Endothelial cell of umbilical vein (primary cell): ENCODE measurements at regions of chr6 and their contacts with region 1.

Region 1: GRCh38 chr6:118283766-118284165 is 264.3 kb upstream of the PLN start:
- DNase-seq: peak; percentile 64
- H3K4me3 ChIP-seq: no peak overlapping the region
- H3K27ac ChIP-seq: no peak overlapping the region
- H3K4me1 ChIP-seq: peaks cover 8% of the 10 kb centered on the region
- H3K27me3 ChIP-seq: peaks cover 0 to 2% of the 10 kb centered on the region in 2 experiments
- CTCF ChIP-seq: peak; percentile 63 to 65
- POLR2A ChIP-seq: no peak

Region 2: GRCh38 chr6:118387764-118388701 is 104.3 kb after region 1 on chr6:
- CTCF ChIA-PET with region 1: no interaction called
- POLR2A ChIA-PET with region 1: no interaction called
- dilution Hi-C with region 1: no loop called
- intact Hi-C with region 1: loop called (anchors 2 kb)
- DNase-seq: peak; percentile 97
- H3K4me3 ChIP-seq: no peak overlapping the region
- H3K27ac ChIP-seq: peak overlapping the region; percentile 81
- H3K4me1 ChIP-seq: peaks cover 24% of the 10 kb centered on the region
- H3K27me3 ChIP-seq: no peaks in the 10 kb centered on the region
- CTCF ChIP-seq: no peak
- POLR2A ChIP-seq: peak; percentile 50

Region 3: GRCh38 chr6:118551063-118552053 is 267.6 kb after region 1 on chr6:
- CTCF ChIA-PET with region 1: interaction called, 16 read pairs
- POLR2A ChIA-PET with region 1: no interaction called
- dilution Hi-C with region 1: no loop called
- intact Hi-C with region 1: loop called (anchors 1 kb)
- DNase-seq: peak; percentile 79
- H3K4me3 ChIP-seq: no peak overlapping the region
- H3K27ac ChIP-seq: no peak overlapping the region
- H3K4me1 ChIP-seq: no peaks in the 10 kb centered on the region
- H3K27me3 ChIP-seq: no peaks in the 10 kb centered on the region
- CTCF ChIP-seq: peak; percentile 31 to 46
- POLR2A ChIP-seq: no peak

Region 4: GRCh38 chr6:118618679-118619377 is 335.1 kb after region 1 on chr6:
- CTCF ChIA-PET with region 1: interaction called, 12 read pairs
- POLR2A ChIA-PET with region 1: no interaction called
- dilution Hi-C with region 1: no loop called
- intact Hi-C with region 1: loop called (anchors 1 kb)
- DNase-seq: peak; percentile 54
- H3K4me3 ChIP-seq: no peak overlapping the region
- H3K27ac ChIP-seq: no peak overlapping the region
- H3K4me1 ChIP-seq: no peaks in the 10 kb centered on the region
- H3K27me3 ChIP-seq: no peaks in the 10 kb centered on the region
- CTCF ChIP-seq: peak; percentile 78 to 82
- POLR2A ChIP-seq: no peak

Region 5: DNA sequence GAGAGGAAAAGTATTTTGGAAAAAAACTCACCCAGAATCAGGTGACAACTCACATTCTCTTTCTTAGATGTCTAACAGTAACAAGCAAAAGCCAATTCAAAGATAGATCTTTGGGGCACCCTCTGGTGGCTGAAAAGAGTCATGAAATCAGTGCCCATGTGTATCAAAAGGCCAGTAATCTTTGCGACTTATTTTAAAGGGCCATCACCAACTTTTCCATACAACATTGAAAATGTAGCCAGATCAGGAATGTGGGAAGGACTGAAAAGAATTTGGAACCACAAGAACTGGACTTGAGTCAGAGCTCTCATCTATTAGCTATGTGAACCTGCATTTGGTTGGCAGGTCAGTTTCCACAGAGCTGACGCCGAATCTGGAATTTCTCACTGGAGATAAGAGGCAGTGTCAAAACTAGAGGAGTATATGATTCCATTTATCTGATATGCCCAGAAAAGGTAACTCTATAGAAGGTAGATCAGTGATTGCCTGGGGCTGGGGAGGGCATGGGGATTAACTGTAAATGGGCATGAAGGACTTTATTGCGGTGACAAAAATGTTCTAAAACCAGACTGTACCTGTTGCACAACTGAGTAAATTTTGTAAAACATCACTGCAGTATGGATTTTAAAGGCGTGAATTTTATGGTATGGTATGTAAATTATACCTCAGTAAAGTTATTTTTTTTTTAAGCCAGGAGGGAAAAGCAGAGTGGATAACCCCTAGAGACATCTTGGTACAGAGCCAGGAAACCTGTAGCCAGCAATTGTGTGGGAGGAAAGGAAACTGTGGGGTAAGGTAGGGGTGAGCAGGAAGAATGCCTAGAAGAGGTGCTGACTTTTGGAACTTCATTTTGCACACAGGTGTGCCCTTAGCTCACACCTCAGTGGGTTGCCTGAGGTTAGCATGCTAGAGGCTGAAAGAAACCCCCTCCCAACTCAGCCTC is 493.1 kb after region 1 on chr6:
- CTCF ChIA-PET with region 1: interaction called, 39 read pairs
- POLR2A ChIA-PET with region 1: no interaction called
- dilution Hi-C with region 1: no loop called
- intact Hi-C with region 1: loop called (anchors 1 kb)
- DNase-seq: peak; percentile 84
- H3K4me3 ChIP-seq: no peak overlapping the region
- H3K27ac ChIP-seq: no peak overlapping the region
- H3K4me1 ChIP-seq: no peaks in the 10 kb centered on the region
- H3K27me3 ChIP-seq: peaks cover 7% of the 10 kb centered on the region in 2 experiments
- CTCF ChIP-seq: peak; percentile 58 to 59
- POLR2A ChIP-seq: no peak

Region 6: DNA sequence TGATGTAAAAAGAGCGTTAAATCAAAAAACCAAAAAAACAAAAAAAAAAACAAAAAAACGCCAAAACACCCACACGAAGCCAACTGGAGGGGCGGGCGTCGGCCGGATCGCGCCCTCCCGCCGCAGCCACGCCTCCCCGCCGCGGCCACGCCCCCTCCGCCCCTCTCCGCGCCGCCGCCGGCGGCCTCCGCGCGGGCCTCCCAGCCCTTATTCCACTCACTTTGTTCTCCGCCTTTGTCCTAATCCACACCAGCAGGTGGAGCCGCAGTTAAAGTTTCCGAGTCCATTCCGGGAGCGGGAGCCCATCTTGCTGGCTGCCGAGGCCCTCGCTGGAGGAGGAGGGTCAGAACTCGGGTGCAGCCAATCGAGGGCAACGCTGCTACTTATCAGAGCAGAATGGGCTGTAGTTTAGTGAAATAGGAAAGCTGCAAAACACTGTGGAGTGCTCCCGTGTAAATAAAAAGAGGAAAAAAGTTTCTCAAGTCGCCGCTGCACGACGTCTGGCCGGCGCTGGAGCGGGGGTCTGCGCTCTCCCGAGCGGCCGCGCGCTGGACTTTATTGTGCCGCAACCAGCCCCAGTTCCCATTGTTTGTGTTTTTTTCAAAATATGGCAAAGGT is 610.1 kb after region 1 on chr6 and contains the start of gene ASF1A:
- CTCF ChIA-PET with region 1: interaction called, 3 read pairs
- POLR2A ChIA-PET with region 1: no interaction called
- dilution Hi-C with region 1: no loop called
- intact Hi-C with region 1: loop called (anchors 2 kb)
- DNase-seq: peak; percentile 98
- H3K4me3 ChIP-seq: peak within 1 kb of the TSS; percentile 64 to 99 (median 87)
- H3K27ac ChIP-seq: peak within 1 kb of the TSS; percentile 91
- H3K4me1 ChIP-seq: peaks cover 18% of the 10 kb centered on the region
- H3K27me3 ChIP-seq: no peaks in the 10 kb centered on the region
- CTCF ChIP-seq: peak; percentile 65 to 69
- POLR2A ChIP-seq: peak; percentile 89
- total RNA-seq, gene ASF1A: 38.4 TPM in 2 replicates